ENCODE measurements at regions of chr12 and their contacts with region 1.

Region 1: GRCh38 chr12:121793838-121794533 is 498 bp upstream of the RHOF start:
- DNase-seq: peak; percentile 89 to 95 (median 93)
- H3K4me3 ChIP-seq: peak overlapping the region; percentile 59 to 82 (median 64)
- H3K4me3 Mint-ChIP-seq: peak overlapping the region; percentile 81 to 89
- H3K27ac ChIP-seq: peak overlapping the region; percentile 49 to 67
- H3K27ac Mint-ChIP-seq: peak overlapping the region; percentile 88 to 98 (median 93)
- H3K4me1 ChIP-seq: peaks cover 87 to 98% of the 10 kb centered on the region in 2 donors
- H3K4me1 Mint-ChIP-seq: peaks cover 67% of the 10 kb centered on the region
- H3K27me3 ChIP-seq: no peaks in the 10 kb centered on the region
- H3K27me3 Mint-ChIP-seq: peaks cover 0 to 2% (median 0%) of the 10 kb centered on the region in 3 donors
- CTCF ChIP-seq: peak; percentile 95

Region 2: DNA sequence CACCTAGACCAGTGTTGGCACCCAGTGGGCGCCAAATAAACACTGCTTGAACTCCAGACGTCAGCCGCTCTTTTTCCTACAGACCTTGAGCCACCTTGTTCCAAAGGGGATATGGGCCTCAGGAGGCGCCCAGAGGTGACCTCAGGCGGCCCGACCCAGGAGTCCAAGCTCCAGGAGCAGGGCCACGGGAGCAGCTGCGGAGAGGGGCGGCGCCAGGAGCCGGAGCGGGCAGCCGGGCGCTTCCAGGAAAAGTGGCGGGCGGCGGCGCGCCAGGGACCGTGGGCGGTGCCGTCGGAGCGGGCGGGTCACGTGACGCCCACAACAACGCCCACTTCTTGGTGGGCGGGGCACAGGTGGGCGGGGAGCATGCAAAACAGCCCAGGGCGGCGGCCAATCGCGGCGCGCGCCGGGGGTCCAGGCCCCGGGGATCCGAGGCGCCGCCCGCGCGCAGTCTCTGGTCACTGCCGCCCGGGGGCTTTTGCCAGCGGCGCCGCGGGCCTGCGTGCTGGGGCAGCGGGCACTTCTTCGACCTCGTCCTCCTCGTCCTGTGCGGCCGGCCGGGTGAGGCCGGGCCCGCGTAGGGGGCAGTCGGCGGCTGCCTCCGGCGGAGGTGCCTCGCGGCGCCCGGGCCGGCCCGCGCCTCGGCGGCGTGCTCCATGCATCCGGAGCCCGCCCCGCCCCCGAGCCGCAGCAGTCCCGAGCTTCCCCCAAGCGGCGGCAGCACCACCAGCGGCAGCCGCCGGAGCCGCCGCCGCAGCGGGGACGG is 167.7 kb before region 1 on chr12 and contains the start of gene ORAI1:
- intact Hi-C with region 1: loop called in 1 of 2 experiments (anchors 5 kb)
- DNase-seq: peak; percentile 90 to 93 (median 92)
- H3K4me3 ChIP-seq: peak within 1 kb of the TSS; percentile 81 to 87 (median 86)
- H3K4me3 Mint-ChIP-seq: peak within 1 kb of the TSS; percentile 90 to 94
- H3K27ac ChIP-seq: peak within 1 kb of the TSS; percentile 82
- H3K27ac Mint-ChIP-seq: peak within 1 kb of the TSS; percentile 83 to 95 (median 90)
- H3K4me1 ChIP-seq: peaks cover 48 to 52% of the 10 kb centered on the region in 2 donors
- H3K4me1 Mint-ChIP-seq: peaks cover 52% of the 10 kb centered on the region
- H3K27me3 ChIP-seq: no peaks in the 10 kb centered on the region
- H3K27me3 Mint-ChIP-seq: peaks cover 0 to 2% (median 0%) of the 10 kb centered on the region in 3 donors
- CTCF ChIP-seq: no peak
- polyA plus RNA-seq, gene ORAI1: 36.4 to 77.9 (median 54.6) TPM

Region 3: GRCh38 chr12:121697098-121697698 is 96.8 kb before region 1 on chr12:
- intact Hi-C with region 1: loop called (anchors 5 kb)
- DNase-seq: peak in 2 of 3 donors; percentile 31 to 66
- H3K4me3 ChIP-seq: no peak overlapping the region
- H3K4me3 Mint-ChIP-seq: peak overlapping the region in 1 of 2 donors; percentile 7
- H3K27ac ChIP-seq: no peak overlapping the region
- H3K27ac Mint-ChIP-seq: peak overlapping the region in 1 of 7 donors; percentile 31
- H3K4me1 ChIP-seq: peaks cover 0 to 3% of the 10 kb centered on the region in 2 donors
- H3K4me1 Mint-ChIP-seq: peaks cover 1% of the 10 kb centered on the region
- H3K27me3 ChIP-seq: no peaks in the 10 kb centered on the region
- H3K27me3 Mint-ChIP-seq: peaks cover 3 to 6% (median 3%) of the 10 kb centered on the region in 3 donors
- CTCF ChIP-seq: peak; percentile 70

Region 4: GRCh38 chr12:121773011-121773777 is 20.8 kb before region 1 on chr12:
- intact Hi-C with region 1: loop called (anchors 1 kb)
- DNase-seq: peak; percentile 57 to 72 (median 68)
- H3K4me3 ChIP-seq: no peak overlapping the region
- H3K4me3 Mint-ChIP-seq: no peak overlapping the region
- H3K27ac ChIP-seq: no peak overlapping the region
- H3K27ac Mint-ChIP-seq: peak overlapping the region in 1 of 7 donors; percentile 20
- H3K4me1 ChIP-seq: peaks cover 7 to 16% of the 10 kb centered on the region in 2 donors
- H3K4me1 Mint-ChIP-seq: peaks cover 13% of the 10 kb centered on the region
- H3K27me3 ChIP-seq: no peaks in the 10 kb centered on the region
- H3K27me3 Mint-ChIP-seq: peaks cover 0 to 1% (median 0%) of the 10 kb centered on the region in 3 donors
- CTCF ChIP-seq: peak; percentile 93

Region 5: DNA sequence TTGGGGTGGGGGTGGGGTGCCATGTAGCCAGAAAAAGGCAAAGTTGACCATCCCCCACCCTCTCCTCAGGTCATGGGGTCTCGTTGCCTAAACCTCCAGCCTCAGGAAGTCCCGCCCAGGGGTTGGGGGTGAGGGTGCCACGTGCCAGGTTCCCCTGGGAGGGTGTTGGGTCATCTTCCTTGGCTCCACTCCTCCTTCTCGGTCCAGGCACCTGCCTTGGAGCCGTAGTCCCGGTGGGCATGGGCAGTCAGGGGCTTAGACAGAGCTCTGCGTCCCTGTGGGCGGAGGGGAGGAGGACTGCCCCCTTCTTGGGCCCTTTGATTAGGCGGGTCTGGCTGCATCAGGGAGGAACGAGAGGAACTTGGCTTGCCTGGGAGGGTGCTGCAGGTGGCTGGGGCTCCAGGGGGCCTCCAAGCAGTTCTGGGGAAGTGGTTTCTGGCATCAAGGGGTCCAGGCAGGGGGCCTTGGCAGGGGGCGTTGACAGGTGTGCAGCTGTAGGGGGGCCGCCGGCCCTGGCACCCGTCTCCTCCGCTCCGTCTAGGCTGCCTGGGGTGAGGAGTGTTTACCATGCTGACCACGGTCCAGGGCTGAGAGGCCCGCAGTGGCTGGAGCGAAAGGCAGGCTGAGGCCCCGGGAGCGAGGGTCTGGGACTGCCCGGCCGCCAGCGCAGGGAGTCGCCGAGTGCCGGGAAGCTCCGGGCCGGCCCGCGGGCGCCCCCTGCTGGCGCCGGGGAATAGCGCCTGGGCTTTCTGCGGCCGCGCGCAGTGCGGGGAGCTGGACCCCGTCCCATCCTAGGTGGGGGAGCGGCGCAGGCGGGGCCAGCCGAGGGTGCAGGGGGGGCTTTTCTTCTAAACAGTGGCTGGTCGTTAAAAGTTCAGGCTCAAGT is 17.7 kb after region 1 on chr12:
- intact Hi-C with region 1: loop called (anchors 1 kb)
- DNase-seq: peak in 2 of 3 donors; percentile 59 to 68
- H3K4me3 ChIP-seq: peak overlapping the region; percentile 66 to 89 (median 67)
- H3K4me3 Mint-ChIP-seq: peak overlapping the region; percentile 79 to 90
- H3K27ac ChIP-seq: peak overlapping the region; percentile 62 to 79
- H3K27ac Mint-ChIP-seq: peak overlapping the region; percentile 75 to 90 (median 79)
- H3K4me1 ChIP-seq: peaks cover 51 to 62% of the 10 kb centered on the region in 2 donors
- H3K4me1 Mint-ChIP-seq: peaks cover 52% of the 10 kb centered on the region
- H3K27me3 ChIP-seq: no peaks in the 10 kb centered on the region
- H3K27me3 Mint-ChIP-seq: peaks cover 0 to 3% (median 0%) of the 10 kb centered on the region in 3 donors
- CTCF ChIP-seq: peak; percentile 99

Region 6: GRCh38 chr12:121858662-121859572 is 64.9 kb after region 1 on chr12 and contains the start of gene HPD:
- intact Hi-C with region 1: no loop called
- DNase-seq: no peak
- H3K4me3 ChIP-seq: no peak within 1 kb of the TSS
- H3K4me3 Mint-ChIP-seq: no peak within 1 kb of the TSS
- H3K27ac ChIP-seq: no peak within 1 kb of the TSS
- H3K27ac Mint-ChIP-seq: peak within 1 kb of the TSS in 1 of 7 donors; percentile 14
- H3K4me1 ChIP-seq: peaks cover 30 to 34% of the 10 kb centered on the region in 2 donors
- H3K4me1 Mint-ChIP-seq: peaks cover 24% of the 10 kb centered on the region
- H3K27me3 ChIP-seq: no peaks in the 10 kb centered on the region
- H3K27me3 Mint-ChIP-seq: peaks cover 4 to 6% (median 5%) of the 10 kb centered on the region in 3 donors
- CTCF ChIP-seq: no peak
- polyA plus RNA-seq, gene HPD: 0.19 to 0.75 TPM in 2 of 3 donors, not detected in the other

Region 7: GRCh38 chr12:121888478-121889266 is 94.7 kb after region 1 on chr12 and contains the start of gene PSMD9:
- intact Hi-C with region 1: loop called (anchors 2 to 5 kb)
- DNase-seq: peak; percentile 97 to 99 (median 99)
- H3K4me3 ChIP-seq: peak within 1 kb of the TSS; percentile 52 to 87 (median 84)
- H3K4me3 Mint-ChIP-seq: peak within 1 kb of the TSS; percentile 94 to 99
- H3K27ac ChIP-seq: peak within 1 kb of the TSS; percentile 92
- H3K27ac Mint-ChIP-seq: peak within 1 kb of the TSS; percentile 97 to 99 (median 99)
- H3K4me1 ChIP-seq: peaks cover 19 to 21% of the 10 kb centered on the region in 2 donors
- H3K4me1 Mint-ChIP-seq: peaks cover 23% of the 10 kb centered on the region
- H3K27me3 ChIP-seq: no peaks in the 10 kb centered on the region
- H3K27me3 Mint-ChIP-seq: peaks cover 0 to 3% (median 1%) of the 10 kb centered on the region in 3 donors
- CTCF ChIP-seq: peak; percentile 53
- polyA plus RNA-seq, gene PSMD9: 89.6 to 135 (median 93.3) TPM

Region 8: GRCh38 chr12:122081697-122082221 is 287.8 kb after region 1 on chr12:
- intact Hi-C with region 1: loop called in 1 of 2 experiments (anchors 10 kb)
- DNase-seq: peak; percentile 61 to 83 (median 75)
- H3K4me3 ChIP-seq: peak overlapping the region; percentile 67 to 98 (median 86)
- H3K4me3 Mint-ChIP-seq: peak overlapping the region; percentile 97 to 98
- H3K27ac ChIP-seq: peak overlapping the region; percentile 73 to 93
- H3K27ac Mint-ChIP-seq: peak overlapping the region; percentile 91 to 98 (median 96)
- H3K4me1 ChIP-seq: peaks cover 60 to 68% of the 10 kb centered on the region in 2 donors
- H3K4me1 Mint-ChIP-seq: peaks cover 72% of the 10 kb centered on the region
- H3K27me3 ChIP-seq: no peaks in the 10 kb centered on the region
- H3K27me3 Mint-ChIP-seq: peaks cover 0 to 1% (median under 1%) of the 10 kb centered on the region in 3 donors
- CTCF ChIP-seq: no peak

Measured in CD14-positive monocyte (primary cell).